ENCODE measurements at regions of chr1 and their contacts with region 1.

Region 1: GRCh38 chr1:212455803-212456528 is 23.2 kb downstream of the NENF start:
- DNase-seq: peak; percentile 88
- H3K4me3 Mint-ChIP-seq: no peak overlapping the region
- H3K27ac Mint-ChIP-seq: no peak overlapping the region
- H3K4me1 Mint-ChIP-seq: no peaks in the 10 kb centered on the region
- H3K27me3 Mint-ChIP-seq: no peaks in the 10 kb centered on the region
- CTCF ChIP-seq: peak; percentile 100

Region 2: DNA sequence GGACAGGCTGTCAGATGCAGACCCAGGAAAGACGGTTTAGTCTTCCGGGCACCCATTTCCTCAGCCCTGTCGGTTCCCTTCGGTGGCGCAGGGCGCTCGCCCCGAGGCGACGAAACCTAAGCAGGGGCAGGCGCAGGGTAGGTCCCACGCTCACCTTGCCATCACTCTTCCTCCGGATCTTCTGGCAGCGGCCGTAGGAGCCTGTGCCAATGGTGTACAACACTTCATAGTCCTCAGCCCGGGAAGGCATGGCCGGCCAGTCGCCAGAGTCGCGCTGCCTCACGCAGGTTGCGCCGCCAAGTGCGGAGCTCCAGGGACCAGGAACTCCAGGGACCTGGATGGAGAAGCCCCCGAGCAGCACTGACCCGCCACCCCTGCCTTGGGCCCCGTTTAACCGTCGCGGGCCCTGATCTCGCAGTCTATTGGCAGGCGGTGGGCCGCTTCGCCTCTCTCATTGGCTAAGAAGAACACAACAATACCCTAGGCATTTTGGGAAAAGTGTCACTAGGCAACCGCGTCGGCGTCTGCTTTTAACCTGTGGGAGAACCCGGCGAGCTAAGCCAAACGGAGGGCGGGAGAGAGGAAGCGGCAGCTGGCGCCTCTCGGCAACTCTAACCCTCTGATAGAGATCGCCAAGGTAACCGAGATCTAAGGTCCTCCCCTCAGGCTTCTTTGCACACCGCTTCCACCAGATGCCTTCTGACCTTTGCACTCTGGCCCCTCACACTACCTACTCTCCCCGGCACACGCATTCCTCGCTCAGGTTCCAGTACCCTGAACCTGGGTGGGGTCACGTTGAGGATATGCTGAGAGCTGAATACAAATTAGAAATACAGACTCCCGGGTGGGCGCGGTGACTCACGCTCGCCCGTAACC is 780.5 kb before region 1 on chr1 and contains the start of gene NEK2:
- CTCF ChIA-PET with region 1: interaction called, 98 read pairs
- POLR2A ChIA-PET with region 1: interaction called, 4 read pairs
- intact Hi-C with region 1: loop called (anchors 1 kb)
- DNase-seq: peak; percentile 100
- H3K4me3 Mint-ChIP-seq: peak within 1 kb of the TSS; percentile 92
- H3K27ac Mint-ChIP-seq: peak within 1 kb of the TSS; percentile 91
- H3K4me1 Mint-ChIP-seq: peaks cover 26% of the 10 kb centered on the region
- H3K27me3 Mint-ChIP-seq: no peaks in the 10 kb centered on the region
- CTCF ChIP-seq: no peak
- total RNA-seq, gene NEK2: 33.4 and 44.5 TPM in 2 replicates

Region 3: DNA sequence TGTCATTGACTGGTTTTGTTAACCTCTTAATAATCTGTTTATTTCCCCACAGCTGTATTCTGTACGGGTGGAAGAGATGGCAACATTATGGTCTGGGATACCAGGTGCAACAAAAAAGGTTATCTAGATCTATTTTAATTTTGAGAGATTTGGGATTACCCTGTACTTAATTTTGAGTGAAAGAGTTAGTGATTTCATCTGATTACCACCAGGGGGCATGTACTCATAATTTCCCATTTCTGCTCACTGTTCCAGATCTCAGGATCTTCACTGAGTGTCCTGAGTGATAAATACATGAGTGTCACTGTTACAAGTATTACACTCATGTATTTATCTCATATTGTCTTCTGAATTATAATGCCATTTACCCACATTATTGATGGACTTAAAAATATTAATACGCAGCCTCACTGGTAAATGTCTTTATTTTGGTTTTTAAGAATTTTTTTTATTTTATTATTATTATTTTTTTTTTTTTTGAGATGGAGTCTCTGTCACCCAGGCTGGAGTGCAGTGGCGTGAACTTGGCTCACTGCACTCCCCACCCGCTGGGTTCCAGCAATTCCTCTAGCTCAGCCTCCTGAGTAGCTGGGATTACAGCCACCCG is 393.0 kb before region 1 on chr1:
- CTCF ChIA-PET with region 1: interaction called, 252 read pairs
- POLR2A ChIA-PET with region 1: interaction called, 6 read pairs
- intact Hi-C with region 1: loop called (anchors 1 kb)
- DNase-seq: peak; percentile 73
- H3K4me3 Mint-ChIP-seq: no peak overlapping the region
- H3K27ac Mint-ChIP-seq: no peak overlapping the region
- H3K4me1 Mint-ChIP-seq: peaks cover 12% of the 10 kb centered on the region
- H3K27me3 Mint-ChIP-seq: no peaks in the 10 kb centered on the region
- CTCF ChIP-seq: peak; percentile 84

Region 4: GRCh38 chr1:212315907-212316306 is 140.1 kb before region 1 on chr1:
- CTCF ChIA-PET with region 1: interaction called, 59 read pairs
- POLR2A ChIA-PET with region 1: no interaction called
- intact Hi-C with region 1: no loop called
- DNase-seq: peak; percentile 72
- H3K4me3 Mint-ChIP-seq: no peak overlapping the region
- H3K27ac Mint-ChIP-seq: peak overlapping the region; percentile 60
- H3K4me1 Mint-ChIP-seq: peaks cover 14% of the 10 kb centered on the region
- H3K27me3 Mint-ChIP-seq: no peaks in the 10 kb centered on the region
- CTCF ChIP-seq: peak; percentile 48

Region 5: DNA sequence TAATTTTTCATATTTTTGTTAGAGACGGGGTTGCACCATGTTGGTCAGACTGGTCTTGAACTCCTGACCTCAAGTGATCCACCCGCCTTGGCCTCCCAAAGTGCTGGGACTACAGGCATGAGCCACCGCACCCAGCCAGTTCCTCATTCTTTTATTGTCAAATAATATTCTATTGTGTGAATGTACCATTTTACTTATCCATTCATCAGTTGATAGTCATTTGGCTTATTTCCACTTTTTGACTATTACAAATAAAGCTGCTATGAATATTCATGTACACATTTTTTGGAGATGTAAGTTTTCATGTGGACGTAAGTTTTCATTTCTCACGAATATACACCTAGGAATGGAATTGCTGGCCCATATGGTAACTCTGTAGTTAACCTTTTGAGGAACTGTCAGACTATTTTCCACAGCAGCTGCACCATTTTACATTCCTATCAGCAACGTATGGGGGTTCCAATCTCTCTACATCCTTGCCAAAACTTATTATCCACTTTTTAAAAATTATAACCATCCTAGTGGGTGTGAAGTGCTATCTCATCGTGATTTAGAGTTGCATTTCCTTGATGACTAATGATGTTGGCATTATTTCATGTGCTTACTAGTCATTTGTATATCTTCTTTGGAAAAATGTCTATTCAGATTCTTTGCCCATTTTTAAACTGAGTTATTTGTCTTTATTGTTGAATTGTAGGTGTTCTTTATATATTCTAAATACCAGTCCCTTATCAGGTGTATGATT is 54.0 kb before region 1 on chr1:
- CTCF ChIA-PET with region 1: interaction called, 13 read pairs
- POLR2A ChIA-PET with region 1: no interaction called
- intact Hi-C with region 1: no loop called
- DNase-seq: peak; percentile 68
- H3K4me3 Mint-ChIP-seq: no peak overlapping the region
- H3K27ac Mint-ChIP-seq: peak overlapping the region; percentile 49
- H3K4me1 Mint-ChIP-seq: peaks cover 19% of the 10 kb centered on the region
- H3K27me3 Mint-ChIP-seq: no peaks in the 10 kb centered on the region
- CTCF ChIP-seq: no peak

Region 6: DNA sequence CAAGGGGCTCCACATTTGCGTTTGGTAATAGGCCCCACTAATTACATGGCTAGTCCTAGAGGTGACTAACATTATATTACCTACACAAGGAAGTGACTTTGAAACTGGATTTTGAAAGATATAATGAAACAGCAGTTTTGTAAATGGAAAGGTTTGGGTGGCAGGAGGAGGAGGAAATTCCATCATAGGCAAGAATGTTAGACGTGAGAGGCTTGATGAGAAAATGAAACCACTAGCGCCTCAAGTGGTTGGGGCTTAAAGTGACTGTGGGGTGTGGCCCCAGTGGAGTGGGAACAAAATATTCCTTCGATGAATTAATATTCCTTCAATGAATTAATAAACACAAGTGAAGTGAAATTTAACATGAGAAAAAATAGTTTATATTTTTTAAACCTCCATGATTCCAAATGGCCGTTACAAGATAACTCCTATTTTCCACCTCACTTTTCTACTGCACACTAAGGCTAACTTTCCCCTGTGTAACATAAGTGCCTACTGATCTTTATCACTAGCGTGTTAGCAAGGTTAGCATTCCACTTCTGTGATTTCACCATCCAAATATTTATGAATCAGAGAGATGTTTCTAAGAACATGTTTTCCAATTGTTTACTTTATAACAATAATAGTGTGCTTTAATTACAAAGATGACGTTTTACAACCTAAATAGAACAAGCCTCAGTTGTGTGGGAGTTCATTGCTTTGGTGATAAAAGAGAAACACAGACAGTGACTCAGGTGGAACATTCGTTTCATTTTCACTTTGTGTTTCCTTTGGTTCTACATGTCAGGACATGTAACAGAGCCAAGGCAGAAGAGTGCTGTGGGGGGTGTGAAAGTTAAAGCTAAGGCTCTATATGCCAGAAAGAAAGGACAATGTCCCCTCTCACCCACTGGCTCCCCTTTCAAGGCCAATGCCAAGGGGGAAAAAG is 140.1 kb after region 1 on chr1:
- CTCF ChIA-PET with region 1: interaction called, 29 read pairs
- POLR2A ChIA-PET with region 1: interaction called, 3 read pairs
- intact Hi-C with region 1: no loop called
- DNase-seq: peak; percentile 97
- H3K4me3 Mint-ChIP-seq: peak overlapping the region; percentile 69
- H3K27ac Mint-ChIP-seq: peak overlapping the region; percentile 100
- H3K4me1 Mint-ChIP-seq: peaks cover 27% of the 10 kb centered on the region
- H3K27me3 Mint-ChIP-seq: peaks cover 30% of the 10 kb centered on the region
- CTCF ChIP-seq: peak; percentile 97

Region 7: DNA sequence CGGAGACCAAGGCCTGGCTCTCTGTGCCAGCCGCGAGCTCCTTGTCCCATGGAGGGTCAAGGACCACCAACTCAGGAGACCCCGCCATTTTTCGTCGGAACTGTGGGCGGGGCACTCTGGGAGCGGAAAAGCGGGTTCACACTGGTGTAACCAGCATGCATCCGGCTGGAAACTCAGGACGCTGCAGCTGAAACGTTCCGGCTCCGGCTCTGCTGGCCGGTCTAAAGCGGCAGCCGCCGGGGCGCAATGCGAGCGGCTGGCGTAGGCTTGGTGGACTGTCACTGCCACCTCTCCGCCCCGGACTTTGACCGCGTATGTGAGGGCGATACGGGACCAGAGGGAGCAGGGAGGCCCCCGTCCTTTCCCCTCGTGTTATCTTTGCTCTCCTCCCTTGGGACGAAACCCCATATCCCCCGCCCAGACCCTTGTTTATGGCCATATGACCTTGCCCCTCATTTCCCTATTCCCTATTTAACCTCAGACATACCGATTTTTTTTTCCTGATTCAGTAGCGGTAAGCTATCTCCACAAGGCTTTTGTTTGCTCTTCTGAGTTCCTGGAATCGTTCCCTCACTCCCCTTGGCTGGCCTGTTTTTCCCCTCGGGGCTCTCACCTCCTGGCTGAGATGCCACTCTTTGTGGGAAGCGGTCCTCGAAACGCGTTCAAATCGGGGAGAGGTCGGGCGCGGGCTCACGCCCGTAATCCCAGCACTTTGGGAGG is 335.9 kb after region 1 on chr1 and contains the starts of genes NSL1 and TATDN3:
- CTCF ChIA-PET with region 1: interaction called, 40 read pairs
- POLR2A ChIA-PET with region 1: interaction called, 4 read pairs
- intact Hi-C with region 1: no loop called
- DNase-seq: peak; percentile 98
- H3K4me3 Mint-ChIP-seq: peak within 1 kb of the TSS; percentile 83
- H3K27ac Mint-ChIP-seq: peak within 1 kb of the TSS; percentile 90
- H3K4me1 Mint-ChIP-seq: peaks cover 19% of the 10 kb centered on the region
- H3K27me3 Mint-ChIP-seq: no peaks in the 10 kb centered on the region
- CTCF ChIP-seq: no peak
- total RNA-seq, gene NSL1: 39.7 and 42.2 TPM in 2 replicates
- total RNA-seq, gene TATDN3: 31.5 and 35.7 TPM in 2 replicates